Posterior vena cava (tissue), 2 donors: ENCODE measurements at regions of chrX and their contacts with region 1.

Region 1: GRCh38 chrX:16528620-16529019 is 121.3 kb upstream of the S100G start:
- DNase-seq: no peak

Region 2: DNA sequence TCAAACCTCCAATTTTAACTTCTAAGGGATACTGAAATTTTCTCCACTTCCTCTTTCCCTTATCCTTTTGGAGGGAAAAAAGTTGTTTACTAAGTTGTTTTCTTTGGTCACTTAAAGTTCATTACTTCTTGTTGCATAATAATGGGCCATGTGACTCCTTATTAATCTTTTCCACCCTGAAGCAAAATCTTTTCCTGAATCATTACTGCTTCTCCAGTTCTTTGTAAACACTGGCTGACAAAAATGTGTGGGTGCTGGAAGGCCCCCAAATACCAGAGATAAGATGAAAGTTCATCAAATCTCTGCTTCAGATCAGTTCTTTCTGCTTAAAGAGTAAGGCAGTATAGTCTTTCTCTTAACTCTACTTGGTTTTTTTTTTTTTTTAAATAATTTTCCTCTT is 737.5 kb after region 1 on chrX:
- intact Hi-C with region 1: no loop called
- DNase-seq: no peak

Region 3: DNA sequence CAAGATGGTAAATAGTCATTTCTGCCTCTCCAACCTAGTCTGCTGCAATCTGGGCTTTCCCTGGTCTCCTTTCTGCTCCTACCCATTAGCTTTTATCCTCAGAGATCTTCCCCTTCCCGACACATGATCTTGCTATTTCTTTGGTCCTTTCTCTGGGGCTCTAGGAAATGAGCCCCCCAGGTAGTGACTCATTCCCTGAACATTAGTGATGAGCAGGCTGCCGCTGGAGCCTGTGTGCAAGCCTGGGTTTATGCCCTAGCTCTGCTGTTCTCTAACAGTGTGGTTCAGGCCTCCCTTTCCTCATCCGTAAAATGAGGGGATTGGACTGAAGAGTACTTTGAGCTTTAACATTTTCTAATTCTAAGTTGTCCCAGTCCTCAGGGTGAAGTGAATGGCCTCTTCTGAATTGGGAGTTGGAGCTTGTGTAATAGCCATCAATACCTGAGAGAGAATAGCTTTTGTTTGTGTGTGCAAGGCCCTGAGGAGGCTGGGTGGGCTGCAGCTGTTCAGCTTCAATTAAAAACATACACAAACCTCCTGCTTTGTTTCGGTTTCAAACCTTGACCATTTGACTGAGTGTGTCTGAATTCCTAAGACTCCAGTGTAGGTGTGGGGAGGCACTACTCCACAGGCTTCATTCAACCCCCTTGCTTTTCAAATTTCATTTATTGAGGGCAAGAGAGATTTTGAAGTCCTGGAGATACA is 1093.1 kb after region 1 on chrX:
- intact Hi-C with region 1: loop called in 1 of 2 experiments (anchors 5 kb)
- DNase-seq: no peak